ENCODE measurements at regions of chr5 and their contacts with region 1.

Region 1: GRCh38 chr5:65035211-65036206 is 266.8 kb downstream of the CWC27 start:
- DNase-seq: peak; percentile 92 to 95 (median 93)
- ATAC-seq: peak; percentile 81 to 95 (median 92)
- H3K4me3 ChIP-seq: peak overlapping the region; percentile 45 to 86 (median 69)
- H3K27ac ChIP-seq: peak overlapping the region; percentile 92 to 100 (median 96)
- H3K4me1 ChIP-seq: peaks cover 0 to 54% (median 28%) of the 10 kb centered on the region in 12 donors
- H3K27me3 ChIP-seq: no peaks in the 10 kb centered on the region
- CTCF ChIP-seq: peak in 3 of 12 donors; percentile 5 to 33 (median 21)
- POLR2A ChIP-seq: peak in 1 of 2 donors; percentile 63

Region 2: DNA sequence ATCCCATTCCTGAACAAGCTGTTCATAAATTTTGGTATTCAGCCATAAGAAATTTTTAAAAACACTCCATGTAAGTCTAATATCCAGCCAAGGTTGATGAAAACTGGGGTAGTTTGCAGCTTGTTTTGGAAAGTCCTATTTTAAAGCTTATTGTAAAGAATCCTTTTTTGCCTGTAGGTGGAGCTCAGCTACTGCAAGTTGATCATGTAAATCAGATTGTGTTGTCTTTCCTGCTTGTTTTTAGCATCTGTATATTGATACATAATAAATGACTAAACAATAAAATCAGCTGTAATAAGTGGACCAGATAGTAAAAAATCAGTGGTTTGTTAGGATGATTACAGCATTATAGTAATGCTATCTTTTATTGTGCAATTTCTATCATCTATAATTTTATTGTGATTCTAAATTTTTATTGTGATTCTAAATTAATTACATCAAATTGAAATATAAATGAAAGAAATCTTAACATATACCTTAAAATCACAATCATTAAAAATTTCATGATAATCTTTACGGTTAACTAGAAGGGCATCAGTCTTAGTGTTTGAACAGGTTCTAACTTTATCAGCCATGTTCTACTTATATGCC is 224.4 kb before region 1 on chr5:
- intact Hi-C with region 1: loop called in 4 of 10 experiments (anchors 5 to 10 kb)
- DNase-seq: no peak
- ATAC-seq: peak in 1 of 4 donors; percentile 57
- H3K4me3 ChIP-seq: no peak overlapping the region
- H3K27ac ChIP-seq: no peak overlapping the region
- H3K4me1 ChIP-seq: peaks cover 0 to 16% (median 5%) of the 10 kb centered on the region in 12 donors
- H3K27me3 ChIP-seq: no peaks in the 10 kb centered on the region
- CTCF ChIP-seq: peak; percentile 52 to 83 (median 70)
- POLR2A ChIP-seq: no peak

Region 3: GRCh38 chr5:64818245-64818644 is 217.3 kb before region 1 on chr5:
- intact Hi-C with region 1: loop called in 5 of 10 experiments (anchors 5 to 10 kb)
- DNase-seq: no peak
- ATAC-seq: no peak
- H3K4me3 ChIP-seq: no peak overlapping the region
- H3K27ac ChIP-seq: peak overlapping the region in 2 of 12 donors; percentile 7 to 9
- H3K4me1 ChIP-seq: peaks cover 0 to 32% (median 9%) of the 10 kb centered on the region in 12 donors
- H3K27me3 ChIP-seq: no peaks in the 10 kb centered on the region
- CTCF ChIP-seq: no peak
- POLR2A ChIP-seq: no peak

Region 4: GRCh38 chr5:64958757-64959391 is 76.6 kb before region 1 on chr5:
- intact Hi-C with region 1: loop called in 1 of 10 experiments (anchors 5 kb)
- DNase-seq: no peak
- ATAC-seq: no peak
- H3K4me3 ChIP-seq: no peak overlapping the region
- H3K27ac ChIP-seq: no peak overlapping the region
- H3K4me1 ChIP-seq: no peaks in the 10 kb centered on the region
- H3K27me3 ChIP-seq: no peaks in the 10 kb centered on the region
- CTCF ChIP-seq: peak; percentile 30 to 73 (median 59)
- POLR2A ChIP-seq: no peak

Region 5: DNA sequence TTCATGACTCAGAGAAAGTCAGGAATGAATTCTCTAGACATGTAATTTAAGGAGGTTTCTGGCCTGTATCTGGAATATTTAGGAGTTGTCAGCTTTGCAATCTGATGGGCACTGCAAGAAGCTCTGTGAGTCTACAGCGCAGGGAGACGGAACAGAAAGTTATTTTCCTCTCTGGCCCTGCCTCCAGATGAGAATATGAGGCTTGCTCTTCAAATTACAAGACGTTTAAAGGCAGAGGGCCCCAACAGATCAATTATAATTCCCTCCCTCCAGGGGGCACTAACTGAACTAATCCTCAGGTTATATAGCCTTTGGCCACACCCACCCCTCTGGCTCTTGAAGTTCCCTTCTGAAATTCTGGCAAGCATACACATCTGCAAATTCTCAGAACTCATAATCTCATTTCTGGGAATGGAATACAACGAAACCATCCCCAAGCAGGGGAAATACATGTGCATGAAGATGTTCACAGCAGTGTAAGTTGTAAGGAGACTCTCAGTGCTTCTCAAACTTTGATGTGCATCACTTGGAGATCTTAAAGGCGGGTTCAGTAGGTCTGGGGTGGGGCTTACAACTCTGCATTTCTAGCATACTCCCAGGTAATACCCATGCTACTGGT is 40.9 kb after region 1 on chr5:
- intact Hi-C with region 1: loop called in 1 of 10 experiments (anchors 5 kb)
- DNase-seq: peak in 4 of 5 donors; percentile 27 to 67 (median 50)
- ATAC-seq: peak; percentile 79 to 86 (median 83)
- H3K4me3 ChIP-seq: no peak overlapping the region
- H3K27ac ChIP-seq: peak overlapping the region in 11 of 12 donors; percentile 8 to 75 (median 50)
- H3K4me1 ChIP-seq: peaks cover 0 to 20% (median 9%) of the 10 kb centered on the region in 12 donors
- H3K27me3 ChIP-seq: no peaks in the 10 kb centered on the region
- CTCF ChIP-seq: peak in 10 of 12 donors; percentile 7 to 49 (median 28)
- POLR2A ChIP-seq: no peak

Region 6: GRCh38 chr5:65102828-65103711 is 67.6 kb after region 1 on chr5:
- intact Hi-C with region 1: loop called in 7 of 10 experiments (anchors 5 to 10 kb)
- DNase-seq: peak; percentile 71 to 80 (median 75)
- ATAC-seq: peak; percentile 65 to 89 (median 88)
- H3K4me3 ChIP-seq: peak overlapping the region; percentile 35 to 89 (median 69)
- H3K27ac ChIP-seq: peak overlapping the region; percentile 75 to 94 (median 88)
- H3K4me1 ChIP-seq: peaks cover 0 to 22% (median 8%) of the 10 kb centered on the region in 12 donors
- H3K27me3 ChIP-seq: no peaks in the 10 kb centered on the region
- CTCF ChIP-seq: peak; percentile 17 to 65 (median 46)
- POLR2A ChIP-seq: peak in 1 of 2 donors; percentile 24

Region 7: DNA sequence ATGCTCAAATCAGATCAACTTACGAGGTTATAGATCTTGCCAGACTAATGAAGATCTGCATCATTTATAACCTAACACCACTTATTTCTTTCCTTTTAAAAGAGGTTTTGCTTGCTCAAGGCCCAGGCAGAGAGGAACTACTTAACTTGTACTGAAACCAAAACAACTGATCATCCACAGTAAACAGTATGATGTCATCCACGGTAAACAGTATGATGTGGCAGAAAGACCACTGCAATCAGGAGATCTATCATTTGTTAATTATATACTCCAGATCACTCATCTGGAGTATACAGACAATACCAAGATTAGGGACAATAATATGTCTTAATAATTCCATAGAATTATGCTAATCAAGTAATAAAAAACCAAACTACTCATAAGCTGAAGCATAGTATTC is 329.4 kb after region 1 on chr5:
- intact Hi-C with region 1: loop called in 1 of 10 experiments (anchors 5 kb)
- DNase-seq: no peak
- ATAC-seq: no peak
- H3K4me3 ChIP-seq: peak overlapping the region in 5 of 12 donors; percentile 4 to 30 (median 22)
- H3K27ac ChIP-seq: peak overlapping the region in 9 of 12 donors; percentile 14 to 75 (median 61)
- H3K4me1 ChIP-seq: peaks cover 0 to 30% (median 5%) of the 10 kb centered on the region in 12 donors
- H3K27me3 ChIP-seq: no peaks in the 10 kb centered on the region
- CTCF ChIP-seq: no peak
- POLR2A ChIP-seq: no peak